ENCODE measurements at regions of chr5 and their contacts with region 1.

Region 1: DNA sequence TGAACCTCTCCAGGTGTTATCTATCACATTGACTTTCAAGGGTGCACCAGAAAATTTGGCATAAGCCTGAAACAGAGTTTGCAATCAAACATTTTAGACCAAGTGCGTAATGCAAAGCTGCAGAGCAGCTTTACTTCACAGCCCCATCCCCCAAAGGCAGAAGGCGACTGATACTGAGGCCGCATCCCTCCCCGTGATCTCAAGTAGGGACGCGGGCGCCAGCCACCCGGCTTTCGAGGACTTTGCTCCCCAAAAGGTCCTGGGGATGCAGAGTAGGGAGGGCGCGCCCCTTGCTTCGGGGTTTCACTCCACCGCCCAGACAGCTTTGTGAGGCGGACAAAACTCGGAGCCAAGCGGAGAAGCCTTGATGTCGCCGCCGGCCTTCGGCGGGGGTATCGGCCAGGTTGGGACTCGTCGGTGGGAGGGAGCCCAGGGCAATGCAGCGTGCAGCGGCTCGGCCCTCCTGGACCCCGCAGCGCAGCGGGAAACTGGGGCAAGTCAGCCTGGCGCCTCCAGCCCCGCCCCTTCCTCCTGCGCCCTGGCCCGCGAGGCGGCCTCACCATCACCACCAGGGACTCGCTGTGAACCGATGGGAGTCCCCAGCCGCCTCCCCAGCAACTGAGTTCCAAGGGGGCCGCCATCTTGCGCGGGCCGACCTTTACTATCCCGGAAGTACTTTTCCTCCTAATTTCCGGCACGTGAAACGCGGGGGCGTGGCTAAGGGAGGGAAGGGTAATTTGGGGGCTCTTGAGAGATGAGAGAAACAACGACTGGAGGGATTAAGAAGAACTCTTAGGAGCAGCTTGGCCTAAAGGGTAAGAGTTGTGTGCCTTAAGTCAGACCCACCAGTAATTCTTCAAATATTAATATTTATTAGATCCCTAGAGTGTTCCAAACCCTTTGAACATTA is at the start of gene MTX3:
- DNase-seq: peak; percentile 91
- H3K4me3 Mint-ChIP-seq: peak within 1 kb of the TSS; percentile 90
- H3K27ac Mint-ChIP-seq: peak within 1 kb of the TSS; percentile 99
- H3K4me1 Mint-ChIP-seq: peaks cover 54% of the 10 kb centered on the region
- H3K27me3 Mint-ChIP-seq: no peaks in the 10 kb centered on the region
- total RNA-seq, gene MTX3: 22.8 TPM

Region 2: DNA sequence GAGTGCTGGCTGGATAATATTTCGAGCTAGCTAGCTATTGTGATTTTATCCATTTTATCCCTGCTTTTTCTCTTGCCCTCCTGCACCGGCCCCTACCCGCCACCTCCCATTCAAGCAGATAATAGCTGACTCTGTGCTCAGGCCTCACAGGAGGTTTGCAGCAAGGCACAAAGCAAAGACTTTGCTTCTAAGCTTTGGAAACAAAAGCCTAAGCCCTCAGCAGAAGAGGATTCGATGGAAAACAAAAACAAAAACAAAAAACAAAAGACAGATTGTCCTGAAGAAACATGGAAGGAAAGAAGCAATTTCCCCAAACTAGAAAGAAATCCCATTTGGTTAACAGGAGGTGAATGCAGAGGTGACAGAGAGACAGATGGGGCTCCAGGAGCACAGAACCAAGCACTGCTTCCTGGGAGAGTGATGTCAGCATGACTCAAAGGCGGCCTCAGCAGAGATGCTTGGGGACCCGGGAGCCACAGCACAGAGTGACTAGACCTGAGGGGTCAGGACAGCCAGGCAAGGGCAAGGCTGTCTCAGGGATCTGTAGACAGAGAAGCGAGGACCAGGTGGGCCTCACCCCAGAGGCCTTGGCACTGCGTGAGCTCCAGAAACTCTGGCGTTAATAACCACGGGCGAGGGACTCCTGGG is 28.2 kb before region 1 on chr5:
- CTCF ChIA-PET with region 1: interaction called, 6 read pairs
- POLR2A ChIA-PET with region 1: interaction called, 16 read pairs
- DNase-seq: peak; percentile 58
- H3K4me3 Mint-ChIP-seq: peak overlapping the region; percentile 14
- H3K27ac Mint-ChIP-seq: peak overlapping the region; percentile 72
- H3K4me1 Mint-ChIP-seq: peaks cover 32% of the 10 kb centered on the region
- H3K27me3 Mint-ChIP-seq: peaks cover 1% of the 10 kb centered on the region

Region 3: DNA sequence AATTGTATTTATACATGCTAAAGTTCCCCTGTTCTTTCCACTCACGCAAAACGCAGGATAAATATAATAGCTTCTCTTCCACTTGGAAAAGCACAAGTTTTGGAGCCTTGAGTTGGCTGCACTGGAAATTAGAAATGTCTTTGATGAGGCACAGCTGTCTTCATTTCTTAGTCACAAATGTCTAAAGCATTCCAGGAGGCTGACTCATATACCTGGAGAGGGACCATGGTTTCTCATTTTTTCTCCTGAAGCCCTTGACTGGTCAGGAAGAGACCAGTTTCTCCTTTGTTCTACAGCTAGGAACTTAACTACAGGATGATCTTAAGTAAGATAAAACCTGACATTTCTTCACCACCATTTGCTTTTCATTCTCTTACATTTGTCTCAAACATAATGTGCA is 16.0 kb before region 1 on chr5:
- CTCF ChIA-PET with region 1: interaction called, 4 read pairs
- POLR2A ChIA-PET with region 1: interaction called, 89 read pairs
- DNase-seq: no peak
- H3K4me3 Mint-ChIP-seq: no peak overlapping the region
- H3K27ac Mint-ChIP-seq: no peak overlapping the region
- H3K4me1 Mint-ChIP-seq: peaks cover 3% of the 10 kb centered on the region
- H3K27me3 Mint-ChIP-seq: peaks cover 7% of the 10 kb centered on the region

Region 4: DNA sequence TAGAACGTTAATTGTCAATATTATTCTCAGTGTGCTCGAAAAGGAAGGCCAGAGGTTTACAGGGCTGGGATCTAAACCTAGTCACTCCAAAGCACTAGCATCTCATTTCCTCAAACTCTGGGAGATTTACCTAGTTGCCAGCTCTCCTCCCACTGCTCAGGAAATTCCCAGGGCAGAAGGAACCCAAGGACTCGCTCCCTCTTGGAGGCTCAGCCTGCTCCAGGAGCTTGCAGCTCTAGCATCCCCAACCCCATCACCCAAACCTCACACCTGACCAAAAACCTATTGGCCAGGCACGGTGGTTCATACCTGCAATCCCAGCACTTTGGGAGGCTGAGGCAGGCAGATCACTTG is 239.0 kb after region 1 on chr5:
- CTCF ChIA-PET with region 1: no interaction called
- POLR2A ChIA-PET with region 1: no interaction called
- DNase-seq: no peak
- H3K4me3 Mint-ChIP-seq: no peak overlapping the region
- H3K27ac Mint-ChIP-seq: no peak overlapping the region
- H3K4me1 Mint-ChIP-seq: peaks cover 52% of the 10 kb centered on the region
- H3K27me3 Mint-ChIP-seq: no peaks in the 10 kb centered on the region

Measured in activated CD4-positive, alpha-beta memory T cell treated with anti-CD3 and anti-CD28 coated beads, Interleukin-2, amount 10 ng/mL, durations not matched to agents 7 days and 5 days (primary cell).